PC-3 (cell line): ENCODE measurements at regions of chr5 and their contacts with region 1.

Region 1: DNA sequence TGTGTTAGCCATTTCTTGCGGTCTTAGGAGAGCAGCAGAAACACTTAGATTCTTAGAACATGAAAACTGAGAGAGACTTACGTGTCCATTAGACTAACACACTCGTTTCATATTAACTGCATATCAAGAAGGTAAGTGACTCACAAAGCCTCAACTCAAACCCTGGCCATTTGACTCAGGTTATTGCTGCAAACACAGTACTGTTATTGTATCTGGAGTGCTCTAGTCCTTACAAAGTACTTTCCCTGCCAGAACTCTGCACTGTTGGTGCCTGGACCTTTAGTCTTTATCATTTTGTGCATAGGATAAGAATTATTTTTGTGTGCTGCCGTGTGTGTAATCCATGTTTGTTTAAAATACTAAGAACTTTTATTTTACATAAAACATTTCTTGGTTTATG is 155.7 kb downstream of the FBXL7 start:
- DNase-seq: no peak
- ATAC-seq: no peak
- H3K4me3 ChIP-seq: no peak overlapping the region
- H3K27ac ChIP-seq: no peak overlapping the region
- H3K4me1 ChIP-seq: no peaks in the 10 kb centered on the region
- H3K27me3 ChIP-seq: no peaks in the 10 kb centered on the region
- CTCF ChIP-seq: no peak

Region 2: GRCh38 chr5:15092801-15093200 is 562.9 kb before region 1 on chr5:
- CTCF ChIA-PET with region 1: no interaction called
- POLR2A ChIA-PET with region 1: no interaction called
- intact Hi-C with region 1: loop called (anchors 5 kb)
- DNase-seq: no peak
- ATAC-seq: no peak
- H3K4me3 ChIP-seq: no peak overlapping the region
- H3K27ac ChIP-seq: no peak overlapping the region
- H3K4me1 ChIP-seq: no peaks in the 10 kb centered on the region
- H3K27me3 ChIP-seq: peaks cover 17% of the 10 kb centered on the region; the same call in 1 of the 2 replicates
- CTCF ChIP-seq: no peak

Region 3: GRCh38 chr5:15558240-15558639 is 97.4 kb before region 1 on chr5:
- CTCF ChIA-PET with region 1: no interaction called
- POLR2A ChIA-PET with region 1: no interaction called
- intact Hi-C with region 1: no loop called
- DNase-seq: no peak
- ATAC-seq: no peak
- H3K4me3 ChIP-seq: no peak overlapping the region
- H3K27ac ChIP-seq: no peak overlapping the region
- H3K4me1 ChIP-seq: no peaks in the 10 kb centered on the region
- H3K27me3 ChIP-seq: no peaks in the 10 kb centered on the region
- CTCF ChIP-seq: no peak

Region 4: DNA sequence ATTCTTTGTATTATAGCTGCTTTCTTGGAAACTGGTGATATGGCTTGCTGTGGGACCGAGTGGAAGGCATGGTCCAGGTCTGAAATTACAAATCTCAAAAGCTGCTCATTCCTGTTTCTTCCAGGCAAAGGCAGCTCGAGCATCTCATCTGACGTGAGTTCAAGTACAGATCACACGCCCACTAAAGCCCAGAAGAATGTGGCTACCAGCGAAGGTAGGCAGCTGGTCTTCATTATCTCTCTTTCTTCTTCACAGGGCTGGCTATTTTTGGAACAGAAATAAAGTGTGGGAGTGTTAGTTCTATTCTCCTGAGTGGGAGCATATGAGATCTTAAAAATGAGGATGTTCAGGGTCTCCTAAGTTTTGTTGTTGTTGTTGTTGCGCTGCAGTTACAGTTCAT is 39.8 kb before region 1 on chr5:
- CTCF ChIA-PET with region 1: no interaction called
- POLR2A ChIA-PET with region 1: no interaction called
- intact Hi-C with region 1: no loop called
- DNase-seq: no peak
- ATAC-seq: no peak
- H3K4me3 ChIP-seq: no peak overlapping the region
- H3K27ac ChIP-seq: no peak overlapping the region
- H3K4me1 ChIP-seq: no peaks in the 10 kb centered on the region
- H3K27me3 ChIP-seq: no peaks in the 10 kb centered on the region
- CTCF ChIP-seq: no peak